ENCODE measurements at regions of chr19 and their contacts with region 1.

Region 1: GRCh38 chr19:7535035-7535992 is at the start of gene PNPLA6:
- DNase-seq: peak; percentile 88 to 93
- ATAC-seq: peak; percentile 82 to 84
- H3K4me3 ChIP-seq: peak within 1 kb of the TSS; percentile 88 to 92 (median 90)
- H3K27ac ChIP-seq: peak within 1 kb of the TSS; percentile 86 to 90 (median 88)
- H3K4me1 ChIP-seq: peaks cover 15 to 23% of the 10 kb centered on the region in 2 donors
- H3K27me3 ChIP-seq: no peaks in the 10 kb centered on the region
- CTCF ChIP-seq: no peak
- POLR2A ChIP-seq: peak; percentile 49 to 62
- total RNA-seq, gene PNPLA6: 61.4 to 101 (median 75.1) TPM

Region 2: DNA sequence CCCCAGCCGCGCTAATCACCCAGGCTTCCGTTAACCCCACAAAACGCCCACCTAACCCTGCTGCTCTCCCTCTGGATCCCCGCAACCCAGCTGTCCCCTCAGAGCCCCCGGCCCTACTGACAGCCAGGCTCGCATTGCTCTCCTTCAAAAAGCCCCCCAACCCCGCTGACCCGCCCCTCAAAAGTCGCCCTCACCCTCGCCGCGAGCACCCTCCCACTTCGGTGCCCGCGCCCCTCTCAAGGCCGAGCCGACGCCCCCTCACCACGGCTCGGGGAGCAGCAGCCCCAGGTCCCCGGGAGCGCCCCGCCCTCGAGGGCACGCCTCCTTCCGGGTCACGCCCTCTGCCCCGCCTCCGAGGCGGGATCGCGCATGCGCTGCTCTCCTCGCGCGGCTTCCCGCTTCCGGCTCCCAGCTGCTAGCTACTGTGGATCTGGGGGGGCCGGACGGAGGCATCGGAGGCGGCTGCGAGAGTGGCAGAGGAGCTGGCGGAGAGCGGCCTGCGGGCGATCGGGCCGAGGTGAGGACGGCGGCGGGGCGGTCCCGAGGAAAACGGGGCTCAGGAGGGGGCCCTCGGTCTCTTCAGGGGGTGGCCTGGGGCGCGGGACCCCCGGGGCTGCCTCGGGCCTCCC is 140.5 kb before region 1 on chr19:
- in situ Hi-C with region 1: loop called in 1 of 4 experiments (anchors 25 kb)
- intact Hi-C with region 1: loop called (anchors 1 kb)
- DNase-seq: peak; percentile 70 to 83
- ATAC-seq: peak; percentile 96 to 97
- H3K4me3 ChIP-seq: peak overlapping the region; percentile 92 to 100 (median 97)
- H3K27ac ChIP-seq: peak overlapping the region; percentile 80 to 87 (median 84)
- H3K4me1 ChIP-seq: peaks cover 25 to 31% of the 10 kb centered on the region in 2 donors
- H3K27me3 ChIP-seq: no peaks in the 10 kb centered on the region
- CTCF ChIP-seq: no peak
- POLR2A ChIP-seq: peak; percentile 37 to 46

Region 3: GRCh38 chr19:7408251-7408650 is 127.1 kb before region 1 on chr19:
- in situ Hi-C with region 1: no loop called
- intact Hi-C with region 1: no loop called
- DNase-seq: no peak
- ATAC-seq: no peak
- H3K4me3 ChIP-seq: no peak overlapping the region
- H3K27ac ChIP-seq: no peak overlapping the region
- H3K4me1 ChIP-seq: no peaks in the 10 kb centered on the region
- H3K27me3 ChIP-seq: no peaks in the 10 kb centered on the region
- CTCF ChIP-seq: no peak
- POLR2A ChIP-seq: no peak

Region 4: GRCh38 chr19:7427944-7428343 is 107.4 kb before region 1 on chr19:
- in situ Hi-C with region 1: no loop called
- intact Hi-C with region 1: no loop called
- DNase-seq: no peak
- ATAC-seq: no peak
- H3K4me3 ChIP-seq: no peak overlapping the region
- H3K27ac ChIP-seq: no peak overlapping the region
- H3K4me1 ChIP-seq: no peaks in the 10 kb centered on the region
- H3K27me3 ChIP-seq: no peaks in the 10 kb centered on the region
- CTCF ChIP-seq: no peak
- POLR2A ChIP-seq: no peak

Region 5: GRCh38 chr19:7515645-7516151 is 19.6 kb before region 1 on chr19 and contains the start of gene ZNF358:
- in situ Hi-C with region 1: no loop called
- intact Hi-C with region 1: loop called (anchors 2 kb)
- DNase-seq: peak; percentile 36 to 55
- ATAC-seq: peak; percentile 71 to 81
- H3K4me3 ChIP-seq: peak within 1 kb of the TSS; percentile 71 to 82 (median 76)
- H3K27ac ChIP-seq: peak within 1 kb of the TSS; percentile 78 to 87 (median 84)
- H3K4me1 ChIP-seq: peaks cover 9 to 14% of the 10 kb centered on the region in 2 donors
- H3K27me3 ChIP-seq: no peaks in the 10 kb centered on the region
- CTCF ChIP-seq: no peak
- POLR2A ChIP-seq: no peak
- total RNA-seq, gene ZNF358: 69.8 to 139 (median 116) TPM

Region 6: DNA sequence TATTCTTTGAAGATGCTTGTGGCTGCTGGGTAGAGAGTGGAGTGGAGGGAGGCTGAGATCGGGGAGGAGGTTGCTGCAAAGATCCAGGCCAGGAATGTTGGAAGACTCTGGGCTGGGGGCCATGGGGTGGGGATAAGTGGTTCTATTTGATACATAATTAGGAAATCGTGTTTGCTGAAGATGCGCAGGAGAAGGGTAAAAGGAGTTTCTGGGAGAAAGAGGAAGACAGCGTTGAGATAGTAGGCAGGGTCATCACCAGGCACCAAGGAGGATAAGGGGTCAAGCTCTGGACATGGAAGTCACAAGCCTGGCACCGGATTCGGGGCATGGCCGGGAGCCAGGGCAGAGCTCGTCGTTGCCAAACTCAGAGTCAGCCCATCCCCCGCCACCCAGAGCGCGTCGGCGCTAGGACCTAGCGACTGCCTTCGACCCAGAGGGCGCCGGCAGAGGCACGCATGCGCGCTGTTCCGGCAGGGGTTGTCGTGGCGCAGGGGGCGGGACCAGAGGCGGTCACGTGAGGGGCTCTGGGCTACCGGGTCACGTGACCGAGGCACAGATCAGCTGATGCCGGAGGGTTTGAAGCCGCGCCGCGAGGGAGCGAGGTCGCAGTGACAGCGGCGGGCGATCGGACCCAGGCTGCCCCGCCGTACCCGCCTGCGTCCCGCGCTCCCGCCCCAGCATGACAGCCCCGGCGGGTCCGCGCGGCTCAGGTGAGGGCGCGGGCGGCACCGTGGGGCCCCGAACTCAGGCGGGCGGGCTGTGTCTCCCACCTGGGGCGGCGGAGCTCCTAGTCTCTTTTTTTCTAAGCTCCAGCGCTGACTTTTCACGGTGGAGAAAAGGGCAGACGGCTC is 13.0 kb before region 1 on chr19 and contains the start of gene MCOLN1:
- in situ Hi-C with region 1: no loop called
- intact Hi-C with region 1: loop called (anchors 1 kb)
- DNase-seq: peak; percentile 99
- ATAC-seq: peak; percentile 92 to 93
- H3K4me3 ChIP-seq: peak within 1 kb of the TSS; percentile 67 to 95 (median 85)
- H3K27ac ChIP-seq: peak within 1 kb of the TSS; percentile 48 to 84 (median 70)
- H3K4me1 ChIP-seq: peaks cover 15 to 19% of the 10 kb centered on the region in 2 donors
- H3K27me3 ChIP-seq: no peaks in the 10 kb centered on the region
- CTCF ChIP-seq: peak in 2 of 5 experiments; percentile 66 to 73
- POLR2A ChIP-seq: peak; percentile 52 to 71
- total RNA-seq, gene MCOLN1: 9.2 to 13.6 (median 11.5) TPM

Region 7: GRCh38 chr19:7550987-7551761 is 15.9 kb after region 1 on chr19:
- in situ Hi-C with region 1: no loop called
- intact Hi-C with region 1: loop called (anchors 1 kb)
- DNase-seq: peak; percentile 59 to 85
- ATAC-seq: peak; percentile 100
- H3K4me3 ChIP-seq: peak overlapping the region; percentile 38 to 49 (median 39)
- H3K27ac ChIP-seq: peak overlapping the region; percentile 41 to 73 (median 51)
- H3K4me1 ChIP-seq: no peaks in the 10 kb centered on the region
- H3K27me3 ChIP-seq: no peaks in the 10 kb centered on the region
- CTCF ChIP-seq: no peak
- POLR2A ChIP-seq: no peak

Region 8: GRCh38 chr19:7575434-7576040 is 40.2 kb after region 1 on chr19:
- in situ Hi-C with region 1: no loop called
- intact Hi-C with region 1: no loop called
- DNase-seq: no peak
- ATAC-seq: no peak
- H3K4me3 ChIP-seq: no peak overlapping the region
- H3K27ac ChIP-seq: no peak overlapping the region
- H3K4me1 ChIP-seq: no peaks in the 10 kb centered on the region
- H3K27me3 ChIP-seq: no peaks in the 10 kb centered on the region
- CTCF ChIP-seq: no peak
- POLR2A ChIP-seq: no peak